ENCODE measurements at regions of chr7 and their contacts with region 1.

Region 1: GRCh38 chr7:92255308-92255707 is 9.5 kb downstream of the ANKIB1 start:
- DNase-seq: no peak
- ATAC-seq: peak in 5 of 8 donors; percentile 52 to 73 (median 66)
- H3K4me3 ChIP-seq: no peak overlapping the region
- H3K27ac ChIP-seq: no peak overlapping the region
- H3K4me1 ChIP-seq: peaks cover 0 to 59% (median 12%) of the 10 kb centered on the region in 9 donors
- H3K27me3 ChIP-seq: no peaks in the 10 kb centered on the region
- CTCF ChIP-seq: no peak

Region 2: DNA sequence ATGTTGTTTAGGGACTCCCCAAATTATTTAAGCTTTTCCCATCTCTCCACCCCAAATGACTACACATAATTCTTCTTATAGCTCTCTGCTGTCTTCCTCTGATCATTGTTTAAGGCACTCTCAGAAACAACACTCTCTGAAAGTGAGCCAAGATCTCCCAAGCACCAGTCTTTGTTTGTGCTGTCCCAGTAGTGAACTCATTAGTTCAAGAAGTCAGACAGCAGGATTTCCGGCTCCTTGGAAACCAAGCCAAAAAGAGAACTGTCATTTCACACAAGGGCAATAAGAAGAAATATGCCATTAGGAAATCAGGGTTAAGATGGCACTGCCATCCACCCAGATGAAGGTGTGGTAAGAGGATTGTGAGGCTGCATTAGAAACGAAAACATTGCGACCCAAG is 908.0 kb before region 1 on chr7:
- intact Hi-C with region 1: no loop called
- DNase-seq: peak in 1 of 2 donors; percentile 32
- ATAC-seq: peak in 7 of 8 donors; percentile 50 to 76 (median 65)
- H3K4me3 ChIP-seq: no peak overlapping the region
- H3K27ac ChIP-seq: peak overlapping the region in 1 of 10 donors; percentile 41
- H3K4me1 ChIP-seq: peaks cover 0 to 63% (median 50%) of the 10 kb centered on the region in 9 donors
- H3K27me3 ChIP-seq: no peaks in the 10 kb centered on the region
- CTCF ChIP-seq: no peak

Region 3: GRCh38 chr7:92292981-92293380 is 37.7 kb after region 1 on chr7:
- intact Hi-C with region 1: loop called in 1 of 10 experiments (anchors 5 kb)
- DNase-seq: no peak
- ATAC-seq: peak in 1 of 8 donors; percentile 52
- H3K4me3 ChIP-seq: no peak overlapping the region
- H3K27ac ChIP-seq: peak overlapping the region in 3 of 10 donors; percentile 32 to 70 (median 40)
- H3K4me1 ChIP-seq: peaks cover 3 to 39% (median 28%) of the 10 kb centered on the region in 9 donors
- H3K27me3 ChIP-seq: no peaks in the 10 kb centered on the region
- CTCF ChIP-seq: no peak

Region 4: DNA sequence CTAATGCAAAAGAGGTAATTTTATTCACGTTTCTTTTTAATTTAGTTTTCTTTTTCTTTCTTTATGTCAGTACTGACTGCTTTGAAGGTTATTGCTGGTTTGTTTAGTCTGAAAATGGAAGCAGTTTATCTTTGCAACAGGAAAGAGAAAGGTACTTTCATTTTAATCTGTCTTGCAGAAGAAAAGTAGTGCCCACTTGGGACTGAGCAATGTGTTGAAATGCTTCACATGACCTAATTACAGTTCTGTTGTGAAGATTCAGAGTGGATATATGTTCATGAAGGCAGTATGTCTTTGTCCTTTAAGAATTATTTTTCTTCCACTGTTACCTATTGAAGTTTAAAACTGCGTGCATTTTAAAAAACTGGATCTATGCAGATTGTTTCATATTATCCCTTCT is 70.5 kb after region 1 on chr7:
- intact Hi-C with region 1: no loop called
- DNase-seq: no peak
- ATAC-seq: no peak
- H3K4me3 ChIP-seq: no peak overlapping the region
- H3K27ac ChIP-seq: no peak overlapping the region
- H3K4me1 ChIP-seq: peaks cover 0 to 15% (median 8%) of the 10 kb centered on the region in 9 donors
- H3K27me3 ChIP-seq: no peaks in the 10 kb centered on the region
- CTCF ChIP-seq: no peak

Region 5: GRCh38 chr7:92436612-92437445 is 181.5 kb after region 1 on chr7:
- intact Hi-C with region 1: no loop called
- DNase-seq: no peak
- ATAC-seq: no peak
- H3K4me3 ChIP-seq: no peak overlapping the region
- H3K27ac ChIP-seq: no peak overlapping the region
- H3K4me1 ChIP-seq: no peaks in the 10 kb centered on the region
- H3K27me3 ChIP-seq: peaks cover 0 to 4% (median 0%) of the 10 kb centered on the region in 7 donors
- CTCF ChIP-seq: no peak

Measured in heart right ventricle (tissue), 16 donors.